Testis (tissue), 5 donors: ENCODE measurements at regions of chr4 and their contacts with region 1.

Region 1: GRCh38 chr4:152243896-152244595 is 291.8 kb downstream of the FBXW7 start:
- DNase-seq: no peak
- H3K4me3 ChIP-seq: no peak overlapping the region
- H3K27ac ChIP-seq: no peak overlapping the region
- H3K4me1 ChIP-seq: no peaks in the 10 kb centered on the region
- H3K27me3 ChIP-seq: no peaks in the 10 kb centered on the region
- CTCF ChIP-seq: no peak
- POLR2A ChIP-seq: no peak

Region 2: GRCh38 chr4:151921811-151922210 is 322.2 kb before region 1 on chr4:
- intact Hi-C with region 1: no loop called
- DNase-seq: no peak
- H3K4me3 ChIP-seq: no peak overlapping the region
- H3K27ac ChIP-seq: no peak overlapping the region
- H3K4me1 ChIP-seq: no peaks in the 10 kb centered on the region
- H3K27me3 ChIP-seq: no peaks in the 10 kb centered on the region
- CTCF ChIP-seq: no peak
- POLR2A ChIP-seq: no peak

Region 3: GRCh38 chr4:152189451-152190179 is 54.4 kb before region 1 on chr4:
- intact Hi-C with region 1: loop called (anchors 10 kb)
- DNase-seq: no peak
- H3K4me3 ChIP-seq: no peak overlapping the region
- H3K27ac ChIP-seq: no peak overlapping the region
- H3K4me1 ChIP-seq: no peaks in the 10 kb centered on the region
- H3K27me3 ChIP-seq: no peaks in the 10 kb centered on the region
- CTCF ChIP-seq: no peak
- POLR2A ChIP-seq: no peak